CD4-positive, alpha-beta T cell (primary cell): ENCODE measurements at regions of chr15 and their contacts with region 1.

Region 1: GRCh38 chr15:68924866-68925560 is 5.3 kb upstream of the SPESP1 start:
- DNase-seq: peak; percentile 26 to 70 (median 50)
- ATAC-seq: peak; percentile 70
- H3K4me3 ChIP-seq: no peak overlapping the region
- H3K4me3 Mint-ChIP-seq: no peak overlapping the region
- H3K27ac ChIP-seq: no peak overlapping the region
- H3K27ac Mint-ChIP-seq: no peak overlapping the region
- H3K4me1 ChIP-seq: no peaks in the 10 kb centered on the region
- H3K4me1 Mint-ChIP-seq: no peaks in the 10 kb centered on the region
- H3K27me3 ChIP-seq: peaks cover 3 to 9% of the 10 kb centered on the region in 2 experiments
- H3K27me3 Mint-ChIP-seq: peaks cover 33% of the 10 kb centered on the region
- CTCF ChIP-seq: peak; percentile 63

Region 2: GRCh38 chr15:68559345-68560310 is 365.4 kb before region 1 on chr15:
- CTCF ChIA-PET with region 1: interaction called, 6 read pairs
- POLR2A ChIA-PET with region 1: no interaction called
- intact Hi-C with region 1: loop called in 1 of 2 experiments (anchors 2 kb)
- DNase-seq: peak; percentile 48 to 85 (median 64)
- ATAC-seq: peak; percentile 93
- H3K4me3 ChIP-seq: peak overlapping the region; percentile 39
- H3K4me3 Mint-ChIP-seq: peak overlapping the region; percentile 75
- H3K27ac ChIP-seq: no peak overlapping the region
- H3K27ac Mint-ChIP-seq: no peak overlapping the region
- H3K4me1 ChIP-seq: peaks cover 17% of the 10 kb centered on the region
- H3K4me1 Mint-ChIP-seq: peaks cover 16% of the 10 kb centered on the region
- H3K27me3 ChIP-seq: peaks cover 24 to 28% of the 10 kb centered on the region in 2 experiments
- H3K27me3 Mint-ChIP-seq: peaks cover 63% of the 10 kb centered on the region
- CTCF ChIP-seq: peak; percentile 99